Calu3 (cell line): ENCODE measurements at regions of chr14 and their contacts with region 1.

Region 1: DNA sequence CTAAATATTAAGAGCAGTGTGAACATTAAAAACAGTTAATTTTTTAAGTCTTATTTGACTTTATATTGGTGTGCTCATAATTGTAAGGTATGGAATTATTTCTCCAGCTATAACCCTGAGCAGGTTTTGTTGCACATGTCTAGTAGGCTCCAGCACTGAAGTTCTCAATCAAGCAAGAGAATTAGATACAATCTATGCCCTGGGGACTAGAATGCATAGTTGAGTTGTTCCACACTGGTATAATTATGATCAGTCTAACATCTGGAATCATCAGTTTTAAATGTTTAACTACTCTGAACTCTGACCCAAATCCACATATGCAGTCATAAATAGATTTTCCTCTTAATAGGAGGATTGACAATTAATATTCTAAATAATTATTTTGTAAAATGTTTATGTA is 257.8 kb upstream of the ARHGAP5 start:
- DNase-seq: no peak
- H3K4me3 Mint-ChIP-seq: no peak overlapping the region
- H3K27ac Mint-ChIP-seq: peak overlapping the region; percentile 28
- H3K4me1 Mint-ChIP-seq: peaks cover 8% of the 10 kb centered on the region
- H3K27me3 Mint-ChIP-seq: no peaks in the 10 kb centered on the region
- CTCF ChIP-seq: no peak

Region 2: GRCh38 chr14:31806263-31806662 is 13.0 kb before region 1 on chr14:
- CTCF ChIA-PET with region 1: no interaction called
- intact Hi-C with region 1: loop called (anchors 1 kb)
- DNase-seq: no peak
- H3K4me3 Mint-ChIP-seq: no peak overlapping the region
- H3K27ac Mint-ChIP-seq: no peak overlapping the region
- H3K4me1 Mint-ChIP-seq: no peaks in the 10 kb centered on the region
- H3K27me3 Mint-ChIP-seq: no peaks in the 10 kb centered on the region
- CTCF ChIP-seq: no peak

Region 3: GRCh38 chr14:32070282-32070681 is 251.0 kb after region 1 on chr14:
- CTCF ChIA-PET with region 1: no interaction called
- intact Hi-C with region 1: no loop called
- DNase-seq: no peak
- H3K4me3 Mint-ChIP-seq: no peak overlapping the region
- H3K27ac Mint-ChIP-seq: no peak overlapping the region
- H3K4me1 Mint-ChIP-seq: peaks cover 7% of the 10 kb centered on the region
- H3K27me3 Mint-ChIP-seq: no peaks in the 10 kb centered on the region
- CTCF ChIP-seq: no peak